CD4-positive, alpha-beta memory T cell (primary cell): ENCODE measurements at regions of chr11 and their contacts with region 1.

Region 1: DNA sequence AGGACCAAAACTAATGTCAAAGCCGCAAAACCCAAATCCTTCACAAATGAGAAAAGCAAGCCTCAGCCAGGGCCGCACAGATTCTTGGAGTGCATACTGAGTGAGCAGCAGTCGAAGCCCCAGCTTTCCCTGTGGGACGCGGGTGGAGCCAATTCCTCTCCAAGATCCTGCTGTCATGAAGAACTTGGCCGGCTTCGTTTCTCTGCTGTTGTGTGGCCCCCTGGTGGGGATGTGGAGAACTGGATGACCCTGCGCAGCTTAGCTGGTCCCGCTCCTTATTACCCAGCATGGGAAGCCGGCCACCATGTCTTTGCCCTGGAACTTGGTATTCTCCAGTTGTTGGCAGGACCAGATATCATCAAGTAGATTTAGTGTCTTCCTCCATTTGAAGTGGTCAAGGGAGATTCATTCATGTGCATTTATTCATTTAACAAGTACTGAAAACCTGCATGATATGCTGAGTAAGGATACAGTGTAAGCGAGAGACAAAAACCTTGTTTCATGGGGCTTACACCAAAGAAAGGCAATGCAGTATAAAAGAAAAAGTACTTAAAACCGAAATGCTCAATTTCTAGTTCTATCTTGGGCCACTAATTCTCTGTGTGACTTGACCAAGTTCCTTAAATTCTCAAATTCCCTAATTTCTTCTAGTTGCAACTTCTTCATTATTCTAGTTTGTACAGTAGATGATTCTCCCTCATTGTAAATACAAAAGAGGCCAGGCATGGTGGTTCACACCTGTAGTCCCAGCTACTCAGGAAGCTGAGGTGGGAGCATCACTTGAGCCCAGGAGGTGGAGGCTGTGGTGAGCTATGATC is 56.7 kb upstream of the CRTAM start:
- DNase-seq: peak; percentile 62 to 71 (median 67)
- H3K4me3 ChIP-seq: no peak overlapping the region
- H3K4me3 Mint-ChIP-seq: no peak overlapping the region
- H3K27ac ChIP-seq: no peak overlapping the region
- H3K27ac Mint-ChIP-seq: no peak overlapping the region
- H3K4me1 ChIP-seq: no peaks in the 10 kb centered on the region
- H3K4me1 Mint-ChIP-seq: peaks cover 0 to 8% (median 1%) of the 10 kb centered on the region in 4 donors
- H3K27me3 ChIP-seq: no peaks in the 10 kb centered on the region
- H3K27me3 Mint-ChIP-seq: no peaks in the 10 kb centered on the region

Region 2: DNA sequence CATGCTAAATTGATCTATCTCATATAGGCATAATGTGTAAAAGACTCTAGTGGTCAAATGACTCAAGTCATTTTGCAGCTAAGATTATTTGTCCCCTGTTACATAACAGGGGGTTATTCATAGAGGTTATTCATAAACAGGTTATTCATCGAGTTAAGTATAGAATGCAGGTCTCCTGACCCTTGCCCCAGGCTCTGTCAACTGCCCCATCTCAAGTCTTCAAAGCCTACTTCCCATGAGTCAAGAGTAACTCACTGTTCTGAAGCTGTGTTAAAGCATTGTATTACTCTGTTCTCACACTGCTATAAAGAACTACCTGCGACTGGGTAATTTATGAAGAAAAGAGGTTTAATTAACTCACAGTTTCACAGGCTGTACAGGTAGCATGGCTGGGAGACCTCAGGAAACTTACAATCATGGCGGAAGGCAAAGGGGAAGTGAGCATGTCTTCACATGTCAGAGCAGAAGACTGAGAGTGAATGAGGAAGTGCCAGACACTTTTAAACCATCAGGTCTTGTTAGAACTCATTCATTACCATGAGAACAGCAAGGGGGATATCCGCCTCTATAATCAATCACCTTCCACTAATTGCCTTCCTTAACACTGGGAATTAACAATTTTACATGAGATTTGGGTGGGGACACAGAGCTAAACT is 439.4 kb before region 1 on chr11:
- CTCF ChIA-PET with region 1: no interaction called
- POLR2A ChIA-PET with region 1: no interaction called
- intact Hi-C with region 1: no loop called
- DNase-seq: no peak
- H3K4me3 ChIP-seq: no peak overlapping the region
- H3K4me3 Mint-ChIP-seq: no peak overlapping the region
- H3K27ac ChIP-seq: no peak overlapping the region
- H3K27ac Mint-ChIP-seq: no peak overlapping the region
- H3K4me1 ChIP-seq: no peaks in the 10 kb centered on the region
- H3K4me1 Mint-ChIP-seq: no peaks in the 10 kb centered on the region
- H3K27me3 ChIP-seq: no peaks in the 10 kb centered on the region
- H3K27me3 Mint-ChIP-seq: peaks cover 0 to 3% of the 10 kb centered on the region in 2 donors

Region 3: GRCh38 chr11:122578168-122578825 is 203.3 kb before region 1 on chr11:
- CTCF ChIA-PET with region 1: interaction called, 42 read pairs
- POLR2A ChIA-PET with region 1: no interaction called
- intact Hi-C with region 1: loop called (anchors 1 kb)
- DNase-seq: no peak
- H3K4me3 ChIP-seq: no peak overlapping the region
- H3K4me3 Mint-ChIP-seq: no peak overlapping the region
- H3K27ac ChIP-seq: no peak overlapping the region
- H3K27ac Mint-ChIP-seq: no peak overlapping the region
- H3K4me1 ChIP-seq: peaks cover 8% of the 10 kb centered on the region
- H3K4me1 Mint-ChIP-seq: peaks cover 5 to 9% (median 9%) of the 10 kb centered on the region in 4 donors
- H3K27me3 ChIP-seq: no peaks in the 10 kb centered on the region
- H3K27me3 Mint-ChIP-seq: peaks cover 2 to 7% of the 10 kb centered on the region in 2 donors

Region 4: GRCh38 chr11:122673701-122674100 is 107.9 kb before region 1 on chr11:
- CTCF ChIA-PET with region 1: interaction called, 16 read pairs
- POLR2A ChIA-PET with region 1: no interaction called
- intact Hi-C with region 1: no loop called
- DNase-seq: no peak
- H3K4me3 ChIP-seq: no peak overlapping the region
- H3K4me3 Mint-ChIP-seq: peak overlapping the region in 4 of 8 donors; percentile 22 to 60 (median 34)
- H3K27ac ChIP-seq: no peak overlapping the region
- H3K27ac Mint-ChIP-seq: peak overlapping the region in 6 of 7 donors; percentile 36 to 77 (median 61)
- H3K4me1 ChIP-seq: peaks cover 90% of the 10 kb centered on the region
- H3K4me1 Mint-ChIP-seq: peaks cover 50 to 91% (median 72%) of the 10 kb centered on the region in 4 donors
- H3K27me3 ChIP-seq: no peaks in the 10 kb centered on the region
- H3K27me3 Mint-ChIP-seq: no peaks in the 10 kb centered on the region

Region 5: DNA sequence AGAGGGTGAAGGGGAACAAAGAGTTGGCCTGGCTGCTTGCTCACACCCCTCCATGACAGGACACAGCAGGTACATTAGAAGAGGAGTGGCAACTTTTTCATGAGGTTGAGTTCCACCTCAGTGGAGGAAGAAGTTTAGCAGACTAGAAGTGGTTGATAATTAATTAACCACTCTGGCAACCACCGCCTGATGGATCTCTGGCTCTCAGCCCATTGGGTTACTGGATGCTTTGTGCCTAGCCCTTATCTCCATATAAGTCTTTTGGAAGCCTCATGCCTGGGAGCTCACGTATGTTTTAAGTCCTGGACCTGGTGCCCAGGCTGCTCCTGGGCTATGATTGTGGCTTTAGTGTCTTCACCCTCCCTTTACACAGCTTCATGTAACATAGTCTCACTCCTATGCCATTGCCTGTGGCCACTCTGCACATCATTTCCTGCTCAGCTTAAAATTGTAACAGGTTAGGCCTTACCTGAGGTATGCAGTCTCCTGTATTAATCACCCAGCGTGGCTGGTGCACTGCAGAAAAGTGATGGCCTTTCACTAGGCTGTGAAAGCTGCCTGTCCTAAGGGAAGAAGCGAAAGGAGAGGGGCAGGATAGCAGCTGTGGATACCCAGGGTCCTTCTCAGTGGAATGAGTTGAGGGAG is 16.0 kb before region 1 on chr11:
- CTCF ChIA-PET with region 1: interaction called, 133 read pairs
- POLR2A ChIA-PET with region 1: no interaction called
- intact Hi-C with region 1: no loop called
- DNase-seq: no peak
- H3K4me3 ChIP-seq: no peak overlapping the region
- H3K4me3 Mint-ChIP-seq: no peak overlapping the region
- H3K27ac ChIP-seq: no peak overlapping the region
- H3K27ac Mint-ChIP-seq: no peak overlapping the region
- H3K4me1 ChIP-seq: peaks cover 5% of the 10 kb centered on the region
- H3K4me1 Mint-ChIP-seq: peaks cover 0 to 25% (median 9%) of the 10 kb centered on the region in 4 donors
- H3K27me3 ChIP-seq: no peaks in the 10 kb centered on the region
- H3K27me3 Mint-ChIP-seq: no peaks in the 10 kb centered on the region

Region 6: GRCh38 chr11:122796128-122796717 is 14.6 kb after region 1 on chr11:
- CTCF ChIA-PET with region 1: interaction called, 29 read pairs
- POLR2A ChIA-PET with region 1: no interaction called
- intact Hi-C with region 1: no loop called
- DNase-seq: peak; percentile 33 to 59 (median 44)
- H3K4me3 ChIP-seq: no peak overlapping the region
- H3K4me3 Mint-ChIP-seq: no peak overlapping the region
- H3K27ac ChIP-seq: no peak overlapping the region
- H3K27ac Mint-ChIP-seq: peak overlapping the region in 2 of 7 donors; percentile 47 to 76
- H3K4me1 ChIP-seq: no peaks in the 10 kb centered on the region
- H3K4me1 Mint-ChIP-seq: peaks cover 0 to 2% (median 0%) of the 10 kb centered on the region in 4 donors
- H3K27me3 ChIP-seq: no peaks in the 10 kb centered on the region
- H3K27me3 Mint-ChIP-seq: no peaks in the 10 kb centered on the region

Region 7: DNA sequence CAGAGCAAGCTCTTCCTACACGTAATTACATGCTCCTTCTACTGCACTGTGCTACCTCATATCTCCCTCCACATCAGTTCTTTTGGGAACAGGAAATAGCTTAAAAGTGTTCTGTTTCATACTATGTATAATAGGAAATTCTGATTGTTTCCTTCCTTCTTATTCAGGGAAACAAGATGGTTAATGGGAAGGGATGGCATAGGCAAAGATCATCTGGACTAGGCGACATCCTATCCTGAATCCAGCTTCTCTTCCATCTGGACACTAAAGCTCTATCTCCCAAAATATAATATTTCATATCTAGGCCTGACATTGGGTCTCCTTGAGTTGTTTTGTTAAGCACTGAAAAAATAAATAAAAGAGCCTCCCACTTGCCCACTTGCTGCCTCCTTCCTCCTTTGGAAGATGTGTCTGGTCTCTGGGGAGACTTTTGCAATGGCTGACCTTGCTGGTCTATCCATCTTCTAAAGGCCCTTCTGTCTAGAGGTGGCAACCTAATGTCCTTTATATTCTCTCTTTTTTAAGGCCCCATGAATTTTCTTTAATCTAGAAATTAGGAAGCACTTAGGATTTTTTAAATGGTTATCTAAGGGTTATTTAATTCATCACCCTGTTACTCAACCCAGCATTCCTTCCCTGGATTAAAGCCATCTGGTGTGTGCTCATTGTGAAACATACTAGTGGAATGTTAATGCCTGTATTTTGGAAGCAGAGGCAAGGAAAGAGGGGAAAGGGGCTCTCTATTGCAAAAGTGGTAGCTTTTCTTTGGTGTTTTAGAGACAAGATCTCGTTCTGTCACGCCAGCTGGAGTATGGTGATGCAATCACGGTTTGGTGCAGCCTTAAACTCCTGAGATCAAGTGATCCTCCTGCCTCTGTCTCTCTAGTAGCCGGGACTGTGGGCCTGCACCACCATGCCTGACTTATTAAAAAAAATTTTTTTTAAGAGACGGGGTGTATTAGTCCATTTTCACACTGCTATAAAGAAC is 392.9 kb after region 1 on chr11:
- CTCF ChIA-PET with region 1: no interaction called
- POLR2A ChIA-PET with region 1: no interaction called
- intact Hi-C with region 1: no loop called
- DNase-seq: no peak
- H3K4me3 ChIP-seq: no peak overlapping the region
- H3K4me3 Mint-ChIP-seq: no peak overlapping the region
- H3K27ac ChIP-seq: no peak overlapping the region
- H3K27ac Mint-ChIP-seq: no peak overlapping the region
- H3K4me1 ChIP-seq: no peaks in the 10 kb centered on the region
- H3K4me1 Mint-ChIP-seq: no peaks in the 10 kb centered on the region
- H3K27me3 ChIP-seq: no peaks in the 10 kb centered on the region
- H3K27me3 Mint-ChIP-seq: peaks cover 5 to 6% of the 10 kb centered on the region in 2 donors